ENCODE measurements at regions of chr20 and their contacts with region 1.

Region 1: DNA sequence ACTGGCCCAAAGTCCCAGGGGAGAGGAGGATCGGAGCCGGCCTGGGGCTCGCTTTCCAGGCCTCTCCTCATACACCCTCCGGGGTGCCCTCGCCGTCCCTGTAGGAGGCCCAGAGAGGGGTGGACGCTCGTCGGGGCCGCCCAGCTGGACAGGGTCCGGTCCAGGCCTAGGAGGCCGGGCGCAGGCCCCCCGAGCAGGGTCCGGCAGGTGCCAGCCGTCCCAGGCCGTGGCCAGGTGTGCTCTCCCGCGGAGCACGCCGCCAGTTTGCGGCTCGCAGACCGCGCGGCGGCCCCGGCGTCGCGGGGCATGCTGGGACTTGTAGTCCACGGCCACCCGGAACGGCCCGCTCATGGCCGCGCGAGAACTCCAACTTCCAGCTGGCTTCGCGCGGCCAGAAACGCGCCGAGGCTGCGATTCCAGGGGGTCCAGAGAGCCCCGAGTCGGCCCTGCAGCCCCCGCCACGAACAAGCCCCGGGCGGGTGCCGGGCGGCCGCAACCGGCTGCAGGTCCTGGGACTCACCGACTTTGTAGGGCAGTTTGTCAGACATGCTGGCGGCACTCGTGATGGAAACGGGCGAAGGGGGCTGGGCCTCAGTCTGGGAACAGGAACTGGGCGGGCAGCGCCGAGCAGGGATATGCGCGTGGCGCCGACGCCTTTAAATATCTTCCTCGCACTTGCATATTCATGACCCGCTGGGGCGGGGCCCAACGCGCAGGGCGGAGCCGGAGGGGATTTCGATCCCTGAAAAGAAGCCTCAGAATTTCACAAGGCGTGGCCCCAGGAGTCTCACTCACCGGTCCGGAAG is at the start of gene AHCY:
- DNase-seq: peak; percentile 97
- ATAC-seq: peak; percentile 96
- H3K4me3 Mint-ChIP-seq: peak within 1 kb of the TSS; percentile 90
- H3K27ac Mint-ChIP-seq: peak within 1 kb of the TSS; percentile 91
- H3K4me1 Mint-ChIP-seq: peaks cover 18% of the 10 kb centered on the region
- H3K27me3 Mint-ChIP-seq: no peaks in the 10 kb centered on the region
- total RNA-seq, gene AHCY: 183 to 189 TPM

Region 2: DNA sequence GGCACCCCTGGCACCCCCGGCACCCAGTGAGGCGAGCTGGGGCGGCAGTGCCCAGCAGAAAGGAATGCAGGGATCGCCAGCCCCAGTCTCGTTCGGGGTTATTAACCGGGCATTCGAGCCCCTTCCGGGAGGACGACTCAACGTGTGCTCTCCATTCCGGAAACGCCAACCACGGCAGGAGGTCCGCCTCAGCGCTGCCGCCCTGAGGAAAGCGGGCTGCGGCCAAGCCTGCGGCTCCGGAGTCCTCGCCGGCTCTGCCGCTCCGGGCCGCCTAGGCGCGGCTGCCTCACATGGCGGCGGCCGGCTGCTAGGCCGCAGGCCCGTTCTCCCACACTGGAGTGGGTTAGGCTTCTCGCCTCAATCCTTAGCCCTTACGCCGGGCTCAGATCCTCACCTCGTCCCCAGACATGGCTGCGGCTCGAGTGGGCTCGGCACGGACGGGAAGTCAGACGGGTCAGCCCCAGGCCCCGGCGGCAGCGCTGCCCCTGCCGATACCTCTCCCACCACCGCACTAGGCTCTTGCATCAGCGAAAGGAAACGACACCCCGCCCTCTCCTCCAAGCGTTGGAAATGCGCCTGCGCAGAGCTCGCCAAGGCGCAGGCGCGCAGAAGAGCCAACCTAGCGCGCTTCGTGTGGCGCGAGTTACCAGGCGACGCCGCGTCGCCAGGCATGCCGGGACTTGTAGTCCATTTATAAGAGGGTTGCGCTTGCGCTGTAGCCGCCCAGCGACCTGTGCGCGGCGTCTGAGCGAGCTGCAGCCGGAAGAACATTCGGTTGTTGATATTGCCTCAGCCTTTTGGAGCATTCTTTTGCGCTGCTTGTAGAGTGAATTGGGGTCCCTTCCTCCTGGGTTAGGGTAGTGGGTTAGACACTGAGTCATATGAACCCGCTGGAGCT is 191.0 kb before region 1 on chr20 and contains the start of gene EIF2S2:
- CTCF ChIA-PET with region 1: no interaction called
- POLR2A ChIA-PET with region 1: no interaction called
- intact Hi-C with region 1: loop called in 1 of 2 experiments (anchors 1 kb)
- DNase-seq: peak; percentile 97
- ATAC-seq: peak; percentile 88
- H3K4me3 Mint-ChIP-seq: peak within 1 kb of the TSS; percentile 86
- H3K27ac Mint-ChIP-seq: peak within 1 kb of the TSS; percentile 97
- H3K4me1 Mint-ChIP-seq: peaks cover 38% of the 10 kb centered on the region
- H3K27me3 Mint-ChIP-seq: no peaks in the 10 kb centered on the region
- total RNA-seq, gene EIF2S2: 179 to 187 TPM

Region 3: GRCh38 chr20:34558320-34559218 is 255.6 kb after region 1 on chr20 and contains the start of gene MAP1LC3A:
- CTCF ChIA-PET with region 1: no interaction called
- POLR2A ChIA-PET with region 1: no interaction called
- intact Hi-C with region 1: loop called in 1 of 2 experiments (anchors 1 kb)
- DNase-seq: peak; percentile 96
- ATAC-seq: peak; percentile 87
- H3K4me3 Mint-ChIP-seq: peak within 1 kb of the TSS; percentile 79
- H3K27ac Mint-ChIP-seq: peak within 1 kb of the TSS; percentile 88
- H3K4me1 Mint-ChIP-seq: peaks cover 14% of the 10 kb centered on the region
- H3K27me3 Mint-ChIP-seq: no peaks in the 10 kb centered on the region
- total RNA-seq, gene MAP1LC3A: 2.5 to 2.7 TPM

Region 4: GRCh38 chr20:34704177-34705007 is 401.5 kb after region 1 on chr20 and contains the start of gene TP53INP2:
- CTCF ChIA-PET with region 1: no interaction called
- POLR2A ChIA-PET with region 1: no interaction called
- intact Hi-C with region 1: loop called in 1 of 2 experiments (anchors 1 kb)
- DNase-seq: peak; percentile 89
- ATAC-seq: peak; percentile 33
- H3K4me3 Mint-ChIP-seq: peak within 1 kb of the TSS; percentile 82
- H3K27ac Mint-ChIP-seq: peak within 1 kb of the TSS; percentile 63
- H3K4me1 Mint-ChIP-seq: peaks cover 22% of the 10 kb centered on the region
- H3K27me3 Mint-ChIP-seq: peaks cover 10% of the 10 kb centered on the region
- total RNA-seq, gene TP53INP2: 2.2 to 2.3 TPM

Region 5: GRCh38 chr20:34955232-34956040 is 652.5 kb after region 1 on chr20 and contains the starts of genes GSS and MYH7B:
- CTCF ChIA-PET with region 1: no interaction called
- POLR2A ChIA-PET with region 1: no interaction called
- intact Hi-C with region 1: loop called in 1 of 2 experiments (anchors 1 kb)
- DNase-seq: peak; percentile 99
- ATAC-seq: peak; percentile 95
- H3K4me3 Mint-ChIP-seq: peak within 1 kb of the TSS; percentile 98
- H3K27ac Mint-ChIP-seq: peak within 1 kb of the TSS; percentile 94
- H3K4me1 Mint-ChIP-seq: peaks cover 16% of the 10 kb centered on the region
- H3K27me3 Mint-ChIP-seq: no peaks in the 10 kb centered on the region
- total RNA-seq, gene GSS: 58.7 to 59.5 TPM
- total RNA-seq, gene MYH7B: 0.23 to 0.40 TPM

Measured in activated CD4-positive, alpha-beta T cell treated with anti-CD3 and anti-CD28 coated beads for 36 hours (primary cell).